ENCODE measurements at regions of chr9 and their contacts with region 1.

Region 1: DNA sequence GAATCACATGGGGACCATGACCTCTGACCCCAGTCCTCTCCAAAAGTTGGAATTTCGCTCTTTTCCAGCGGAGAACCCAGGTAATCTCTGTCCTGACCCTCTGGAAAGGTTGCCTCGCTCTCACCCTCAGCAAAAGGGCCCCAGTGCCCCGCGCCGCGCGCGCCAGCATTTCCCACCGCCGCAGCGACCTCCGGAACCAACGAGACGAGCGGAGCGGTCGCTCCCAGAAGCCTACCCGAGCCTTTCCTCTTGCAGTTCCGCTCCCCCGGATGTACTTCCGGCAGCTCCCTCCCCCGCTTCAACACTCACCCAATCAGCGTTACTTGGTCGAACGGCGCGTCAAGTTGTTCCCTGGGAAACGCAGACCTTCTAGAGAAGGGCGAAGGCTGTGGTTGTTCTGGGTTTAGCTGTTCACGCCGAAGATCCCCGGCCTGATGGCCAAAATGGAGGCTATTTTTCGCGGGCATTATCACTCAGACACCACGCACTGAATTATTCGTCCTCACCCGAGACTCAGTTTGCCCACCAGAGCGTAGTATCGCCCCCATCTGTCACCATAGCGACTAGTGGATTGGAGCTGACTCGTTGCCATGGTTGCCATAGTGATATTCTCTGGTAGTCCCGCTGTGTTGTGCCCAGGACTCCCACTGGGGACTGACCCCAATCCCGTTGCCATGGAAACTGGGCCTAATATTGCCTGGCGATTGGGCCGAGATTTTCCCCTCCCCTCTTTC is at the start of gene STOML2:
- DNase-seq: peak; percentile 96
- H3K4me3 ChIP-seq: peak within 1 kb of the TSS; percentile 75 to 84
- H3K27ac ChIP-seq: peak within 1 kb of the TSS; percentile 86 to 94
- H3K4me1 ChIP-seq: peaks cover 15 to 25% of the 10 kb centered on the region in 2 experiments; a peak in 3 of 4 replicates
- H3K27me3 ChIP-seq: no peaks in the 10 kb centered on the region
- CTCF ChIP-seq: no peak
- EP300 ChIP-seq: no peak; a peak in 1 of 4 replicates
- RAD21 ChIP-seq: no peak
- polyA plus RNA-seq, gene STOML2: 229 and 232 TPM in 2 replicates

Region 2: GRCh38 chr9:35079426-35080341 is 23.4 kb before region 1 on chr9 and contains the start of gene FANCG:
- CTCF ChIA-PET with region 1: interaction called, 12 read pairs
- POLR2A ChIA-PET with region 1: interaction called, 29 read pairs
- DNase-seq: peak; percentile 94
- H3K4me3 ChIP-seq: peak within 1 kb of the TSS; percentile 68 to 74
- H3K27ac ChIP-seq: peak within 1 kb of the TSS; percentile 64 to 88
- H3K4me1 ChIP-seq: peaks cover 11 to 13% of the 10 kb centered on the region in 2 experiments; a peak in 1 of 4 replicates
- H3K27me3 ChIP-seq: no peaks in the 10 kb centered on the region
- CTCF ChIP-seq: no peak
- EP300 ChIP-seq: no peak
- RAD21 ChIP-seq: no peak
- polyA plus RNA-seq, gene FANCG: 25.1 and 25.6 TPM in 2 replicates